A673 (cell line): ENCODE measurements at regions of chr11 and their contacts with region 1.

Region 1: GRCh38 chr11:86747801-86748200 is 52.5 kb upstream of the PRSS23 start:
- DNase-seq: no peak
- H3K4me3 ChIP-seq: no peak overlapping the region
- H3K27ac ChIP-seq: no peak overlapping the region
- H3K4me1 ChIP-seq: peaks cover 8% of the 10 kb centered on the region
- H3K27me3 ChIP-seq: no peaks in the 10 kb centered on the region
- CTCF ChIP-seq: no peak

Region 2: GRCh38 chr11:86559311-86559945 is 188.4 kb before region 1 on chr11:
- CTCF ChIA-PET with region 1: no interaction called
- POLR2A ChIA-PET with region 1: interaction called, 10 read pairs
- intact Hi-C with region 1: no loop called
- DNase-seq: peak; percentile 31
- H3K4me3 ChIP-seq: no peak overlapping the region
- H3K27ac ChIP-seq: no peak overlapping the region
- H3K4me1 ChIP-seq: no peaks in the 10 kb centered on the region
- H3K27me3 ChIP-seq: no peaks in the 10 kb centered on the region
- CTCF ChIP-seq: no peak